Endothelial cell of umbilical vein (primary cell): ENCODE measurements at regions of chr18 and their contacts with region 1.

Region 1: GRCh38 chr18:29154758-29155725 is 978.1 kb upstream of the CDH2 start:
- DNase-seq: peak; percentile 86
- H3K4me3 ChIP-seq: peak overlapping the region in 1 of 3 experiments; percentile 51
- H3K27ac ChIP-seq: peak overlapping the region; percentile 96
- H3K4me1 ChIP-seq: peaks cover 54% of the 10 kb centered on the region
- H3K27me3 ChIP-seq: no peaks in the 10 kb centered on the region
- CTCF ChIP-seq: no peak
- POLR2A ChIP-seq: peak; percentile 45

Region 2: GRCh38 chr18:27839141-27839540 is 1315.9 kb before region 1 on chr18:
- CTCF ChIA-PET with region 1: no interaction called
- POLR2A ChIA-PET with region 1: no interaction called
- dilution Hi-C with region 1: no loop called
- intact Hi-C with region 1: loop called (anchors 2 kb)
- DNase-seq: peak; percentile 89
- H3K4me3 ChIP-seq: no peak overlapping the region
- H3K27ac ChIP-seq: peak overlapping the region; percentile 88
- H3K4me1 ChIP-seq: peaks cover 34% of the 10 kb centered on the region
- H3K27me3 ChIP-seq: no peaks in the 10 kb centered on the region
- CTCF ChIP-seq: no peak
- POLR2A ChIP-seq: no peak

Region 3: GRCh38 chr18:28204154-28204553 is 950.9 kb before region 1 on chr18:
- CTCF ChIA-PET with region 1: no interaction called
- POLR2A ChIA-PET with region 1: no interaction called
- dilution Hi-C with region 1: no loop called
- intact Hi-C with region 1: loop called (anchors 1 kb)
- DNase-seq: peak; percentile 83
- H3K4me3 ChIP-seq: no peak overlapping the region
- H3K27ac ChIP-seq: peak overlapping the region; percentile 93
- H3K4me1 ChIP-seq: peaks cover 16% of the 10 kb centered on the region
- H3K27me3 ChIP-seq: no peaks in the 10 kb centered on the region
- CTCF ChIP-seq: no peak
- POLR2A ChIP-seq: no peak

Region 4: DNA sequence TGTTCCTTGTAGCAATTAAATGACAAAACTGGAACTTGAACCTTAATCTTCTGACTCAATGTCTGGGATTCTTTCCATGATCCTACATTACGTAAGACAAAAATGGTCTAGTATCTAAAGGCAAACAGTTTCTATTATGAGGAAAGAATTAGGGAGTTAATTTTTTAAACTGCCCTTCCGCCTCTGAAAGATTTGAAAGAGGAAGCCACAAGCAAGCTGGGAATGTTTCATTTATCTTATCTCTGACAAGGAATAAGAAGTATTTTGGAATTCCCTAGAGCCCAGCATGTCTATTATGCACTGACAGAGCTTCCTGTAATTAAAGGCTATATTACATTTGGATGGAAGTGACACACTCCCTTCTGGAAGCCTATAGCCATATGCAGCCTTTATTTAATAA is 419.3 kb before region 1 on chr18:
- CTCF ChIA-PET with region 1: no interaction called
- POLR2A ChIA-PET with region 1: no interaction called
- dilution Hi-C with region 1: no loop called
- intact Hi-C with region 1: loop called (anchors 10 kb)
- DNase-seq: peak; percentile 59
- H3K4me3 ChIP-seq: no peak overlapping the region
- H3K27ac ChIP-seq: peak overlapping the region; percentile 45
- H3K4me1 ChIP-seq: peaks cover 8% of the 10 kb centered on the region
- H3K27me3 ChIP-seq: no peaks in the 10 kb centered on the region
- CTCF ChIP-seq: no peak
- POLR2A ChIP-seq: no peak

Region 5: DNA sequence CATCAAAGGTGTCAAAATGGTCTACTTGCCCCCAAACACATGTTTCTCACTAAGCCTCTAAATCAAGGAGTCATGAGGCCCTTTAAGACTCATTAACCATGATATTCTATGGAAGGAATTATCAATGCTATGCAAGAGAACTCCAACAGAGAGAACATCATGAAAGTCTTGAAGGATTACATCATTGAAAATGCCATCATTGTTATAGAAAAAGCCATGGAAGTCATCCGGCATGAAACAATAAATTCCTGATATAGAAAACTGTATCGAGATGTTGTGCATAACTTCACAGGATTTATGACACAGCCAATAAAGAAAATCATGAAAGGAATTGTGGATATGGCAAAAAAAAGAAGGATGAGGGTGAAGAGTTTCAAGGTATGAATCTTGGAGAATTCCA is 385.5 kb after region 1 on chr18:
- CTCF ChIA-PET with region 1: no interaction called
- POLR2A ChIA-PET with region 1: no interaction called
- dilution Hi-C with region 1: no loop called
- intact Hi-C with region 1: no loop called
- DNase-seq: no peak
- H3K4me3 ChIP-seq: no peak overlapping the region
- H3K27ac ChIP-seq: no peak overlapping the region
- H3K4me1 ChIP-seq: no peaks in the 10 kb centered on the region
- H3K27me3 ChIP-seq: no peaks in the 10 kb centered on the region
- CTCF ChIP-seq: no peak
- POLR2A ChIP-seq: no peak

Region 6: GRCh38 chr18:30415903-30416302 is 1260.9 kb after region 1 on chr18:
- CTCF ChIA-PET with region 1: no interaction called
- POLR2A ChIA-PET with region 1: no interaction called
- dilution Hi-C with region 1: no loop called
- intact Hi-C with region 1: no loop called
- DNase-seq: no peak
- H3K4me3 ChIP-seq: no peak overlapping the region
- H3K27ac ChIP-seq: no peak overlapping the region
- H3K4me1 ChIP-seq: no peaks in the 10 kb centered on the region
- H3K27me3 ChIP-seq: no peaks in the 10 kb centered on the region
- CTCF ChIP-seq: no peak
- POLR2A ChIP-seq: no peak